Activated CD4-positive, alpha-beta T cell treated with anti-CD3 and anti-CD28 coated beads, Interleukin-2, amount 10 ng/mL, durations not matched to agents 24 days and 14 days (primary cell): ENCODE measurements at regions of chr14 and their contacts with region 1.

Region 1: GRCh38 chr14:60508707-60509437 is at the start of gene SIX6:
- DNase-seq: no peak
- H3K4me3 Mint-ChIP-seq: no peak within 1 kb of the TSS
- H3K27ac Mint-ChIP-seq: peak within 1 kb of the TSS; percentile 72
- H3K4me1 Mint-ChIP-seq: peaks cover 2% of the 10 kb centered on the region
- H3K27me3 Mint-ChIP-seq: peaks cover 79% of the 10 kb centered on the region
- total RNA-seq, gene SIX6: not detected in 2 replicates

Region 2: GRCh38 chr14:60349663-60350365 is 159.1 kb before region 1 on chr14:
- intact Hi-C with region 1: loop called (anchors 10 kb)
- DNase-seq: peak; percentile 72
- H3K4me3 Mint-ChIP-seq: no peak overlapping the region
- H3K27ac Mint-ChIP-seq: no peak overlapping the region
- H3K4me1 Mint-ChIP-seq: no peaks in the 10 kb centered on the region
- H3K27me3 Mint-ChIP-seq: peaks cover 24% of the 10 kb centered on the region

Region 3: DNA sequence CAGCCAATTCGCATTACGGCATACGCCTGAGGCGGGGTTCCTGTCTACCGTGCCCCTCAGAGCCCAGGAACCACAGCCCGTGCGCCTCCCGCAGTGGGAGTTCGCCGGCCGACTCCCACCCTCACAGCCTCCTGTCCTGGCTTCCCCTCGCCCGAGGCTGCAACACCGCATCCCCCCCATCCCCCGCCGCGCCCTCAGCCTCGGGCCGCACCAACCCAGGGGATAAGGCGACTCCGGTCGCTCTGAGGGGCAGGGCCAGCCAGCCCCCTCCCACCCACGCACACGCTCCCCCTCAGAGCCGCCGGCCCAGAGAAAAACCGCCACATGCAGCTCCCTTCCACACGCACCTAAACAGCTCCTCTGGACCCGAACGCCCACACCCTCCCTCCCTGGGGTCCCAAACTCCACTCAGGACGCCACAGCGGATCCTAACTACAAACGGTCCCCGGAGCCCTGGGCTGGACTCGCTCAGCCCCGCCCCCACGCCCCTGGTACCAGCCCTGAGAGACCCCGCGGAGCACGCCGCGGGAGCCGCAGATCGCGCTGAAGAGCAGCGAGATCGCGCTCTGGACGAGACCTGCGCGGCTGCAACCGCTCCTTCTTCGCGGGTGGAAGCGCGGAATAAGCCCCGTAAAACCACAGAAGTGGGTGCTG is 23.1 kb before region 1 on chr14 and contains the start of gene C14orf39:
- intact Hi-C with region 1: loop called (anchors 2 kb)
- DNase-seq: no peak
- H3K4me3 Mint-ChIP-seq: peak within 1 kb of the TSS; percentile 22
- H3K27ac Mint-ChIP-seq: no peak within 1 kb of the TSS
- H3K4me1 Mint-ChIP-seq: no peaks in the 10 kb centered on the region
- H3K27me3 Mint-ChIP-seq: peaks cover 20% of the 10 kb centered on the region
- total RNA-seq, gene C14orf39: not detected in 2 replicates

Region 4: GRCh38 chr14:60495946-60496345 is 12.9 kb before region 1 on chr14:
- intact Hi-C with region 1: no loop called
- DNase-seq: no peak
- H3K4me3 Mint-ChIP-seq: no peak overlapping the region
- H3K27ac Mint-ChIP-seq: no peak overlapping the region
- H3K4me1 Mint-ChIP-seq: no peaks in the 10 kb centered on the region
- H3K27me3 Mint-ChIP-seq: peaks cover 6% of the 10 kb centered on the region

Region 5: DNA sequence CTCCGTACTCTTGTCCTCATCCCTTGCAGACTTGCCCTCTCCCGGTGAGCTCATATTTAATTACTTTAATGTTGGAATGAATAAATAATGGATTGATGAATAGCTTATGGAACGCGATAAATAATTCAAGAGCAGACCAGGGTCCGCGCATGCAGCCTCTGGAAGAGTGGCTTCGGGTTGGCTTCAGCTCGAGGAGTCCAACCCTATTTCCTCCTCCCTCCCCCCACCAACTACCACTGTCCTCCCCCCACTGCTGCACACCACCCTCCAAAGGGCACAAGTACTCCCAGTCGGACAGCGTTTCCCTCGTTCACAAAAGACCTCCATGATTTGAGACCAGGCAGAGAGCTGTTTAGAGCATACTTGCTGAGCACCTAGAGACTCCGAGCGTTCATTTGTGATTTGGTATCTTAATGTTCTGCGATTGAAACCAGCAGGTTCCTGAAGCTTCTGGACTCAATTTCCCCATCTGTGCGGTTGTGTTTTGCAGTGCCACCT is 141.1 kb after region 1 on chr14:
- intact Hi-C with region 1: loop called (anchors 2 kb)
- DNase-seq: peak; percentile 56
- H3K4me3 Mint-ChIP-seq: peak overlapping the region; percentile 35
- H3K27ac Mint-ChIP-seq: peak overlapping the region; percentile 74
- H3K4me1 Mint-ChIP-seq: peaks cover 30% of the 10 kb centered on the region
- H3K27me3 Mint-ChIP-seq: peaks cover 90% of the 10 kb centered on the region